B cell (primary cell): ENCODE measurements at regions of chr3 and their contacts with region 1.

Region 1: GRCh38 chr3:152350139-152350538 is 81.4 kb downstream of the MBNL1 start:
- DNase-seq: no peak
- ATAC-seq: peak; percentile 17
- H3K4me3 ChIP-seq: no peak overlapping the region
- H3K4me3 Mint-ChIP-seq: no peak overlapping the region
- H3K27ac ChIP-seq: peak overlapping the region in 1 of 2 donors; percentile 45
- H3K27ac Mint-ChIP-seq: no peak overlapping the region
- H3K4me1 ChIP-seq: peaks cover 29 to 57% of the 10 kb centered on the region in 2 donors
- H3K4me1 Mint-ChIP-seq: peaks cover 41% of the 10 kb centered on the region
- H3K27me3 ChIP-seq: no peaks in the 10 kb centered on the region
- H3K27me3 Mint-ChIP-seq: no peaks in the 10 kb centered on the region
- CTCF ChIP-seq: no peak

Region 2: GRCh38 chr3:152139651-152140050 is 210.5 kb before region 1 on chr3:
- CTCF ChIA-PET with region 1: no interaction called
- POLR2A ChIA-PET with region 1: no interaction called
- intact Hi-C with region 1: no loop called
- DNase-seq: no peak
- ATAC-seq: no peak
- H3K4me3 ChIP-seq: no peak overlapping the region
- H3K4me3 Mint-ChIP-seq: no peak overlapping the region
- H3K27ac ChIP-seq: no peak overlapping the region
- H3K27ac Mint-ChIP-seq: no peak overlapping the region
- H3K4me1 ChIP-seq: no peaks in the 10 kb centered on the region
- H3K4me1 Mint-ChIP-seq: no peaks in the 10 kb centered on the region
- H3K27me3 ChIP-seq: no peaks in the 10 kb centered on the region
- H3K27me3 Mint-ChIP-seq: no peaks in the 10 kb centered on the region
- CTCF ChIP-seq: no peak

Region 3: GRCh38 chr3:152213203-152213602 is 136.9 kb before region 1 on chr3:
- CTCF ChIA-PET with region 1: no interaction called
- POLR2A ChIA-PET with region 1: no interaction called
- intact Hi-C with region 1: no loop called
- DNase-seq: no peak
- ATAC-seq: no peak
- H3K4me3 ChIP-seq: no peak overlapping the region
- H3K4me3 Mint-ChIP-seq: no peak overlapping the region
- H3K27ac ChIP-seq: no peak overlapping the region
- H3K27ac Mint-ChIP-seq: peak overlapping the region; percentile 2
- H3K4me1 ChIP-seq: peaks cover 0 to 3% of the 10 kb centered on the region in 2 donors
- H3K4me1 Mint-ChIP-seq: peaks cover 9% of the 10 kb centered on the region
- H3K27me3 ChIP-seq: no peaks in the 10 kb centered on the region
- H3K27me3 Mint-ChIP-seq: no peaks in the 10 kb centered on the region
- CTCF ChIP-seq: no peak

Region 4: DNA sequence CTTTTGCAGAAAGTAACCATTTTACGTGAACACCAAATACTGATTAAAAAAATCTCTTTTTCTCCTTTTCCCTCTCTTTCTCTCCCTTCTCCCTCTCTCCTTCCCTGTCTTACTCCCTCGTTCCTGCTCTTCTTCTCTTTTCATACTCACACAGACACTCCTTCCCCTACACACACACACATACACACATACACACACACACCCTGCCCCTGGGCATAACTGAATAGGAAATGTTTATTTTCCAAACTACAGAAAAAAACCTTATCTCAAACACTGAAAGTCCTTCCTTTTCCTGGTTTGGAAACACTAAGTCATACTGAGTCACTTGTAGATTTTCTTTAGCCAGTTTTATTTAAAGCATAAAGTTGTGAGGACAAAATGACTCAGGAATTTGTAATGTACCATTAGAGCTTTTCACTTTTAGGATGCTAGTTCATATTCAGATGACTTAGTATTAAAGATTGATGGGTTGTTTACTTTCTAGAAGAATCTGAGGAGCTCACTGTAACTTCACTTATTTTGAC is 19.1 kb before region 1 on chr3:
- CTCF ChIA-PET with region 1: no interaction called
- POLR2A ChIA-PET with region 1: no interaction called
- intact Hi-C with region 1: loop called (anchors 2 kb)
- DNase-seq: no peak
- ATAC-seq: no peak
- H3K4me3 ChIP-seq: no peak overlapping the region
- H3K4me3 Mint-ChIP-seq: peak overlapping the region; percentile 2
- H3K27ac ChIP-seq: peak overlapping the region in 1 of 2 donors; percentile 70
- H3K27ac Mint-ChIP-seq: peak overlapping the region; percentile 32
- H3K4me1 ChIP-seq: peaks cover 38 to 60% of the 10 kb centered on the region in 2 donors
- H3K4me1 Mint-ChIP-seq: peaks cover 75% of the 10 kb centered on the region
- H3K27me3 ChIP-seq: no peaks in the 10 kb centered on the region
- H3K27me3 Mint-ChIP-seq: no peaks in the 10 kb centered on the region
- CTCF ChIP-seq: no peak

Region 5: GRCh38 chr3:152365766-152366593 is 15.8 kb after region 1 on chr3:
- CTCF ChIA-PET with region 1: interaction called, 3 read pairs
- POLR2A ChIA-PET with region 1: no interaction called
- intact Hi-C with region 1: loop called (anchors 2 kb)
- DNase-seq: no peak
- ATAC-seq: no peak
- H3K4me3 ChIP-seq: no peak overlapping the region
- H3K4me3 Mint-ChIP-seq: no peak overlapping the region
- H3K27ac ChIP-seq: peak overlapping the region in 1 of 2 donors; percentile 11
- H3K27ac Mint-ChIP-seq: peak overlapping the region; percentile 12
- H3K4me1 ChIP-seq: peaks cover 7 to 25% of the 10 kb centered on the region in 2 donors
- H3K4me1 Mint-ChIP-seq: peaks cover 70% of the 10 kb centered on the region
- H3K27me3 ChIP-seq: no peaks in the 10 kb centered on the region
- H3K27me3 Mint-ChIP-seq: no peaks in the 10 kb centered on the region
- CTCF ChIP-seq: no peak

Region 6: GRCh38 chr3:152385761-152386160 is 35.6 kb after region 1 on chr3:
- CTCF ChIA-PET with region 1: no interaction called
- POLR2A ChIA-PET with region 1: no interaction called
- intact Hi-C with region 1: loop called (anchors 5 kb)
- DNase-seq: no peak
- ATAC-seq: no peak
- H3K4me3 ChIP-seq: no peak overlapping the region
- H3K4me3 Mint-ChIP-seq: no peak overlapping the region
- H3K27ac ChIP-seq: peak overlapping the region in 1 of 2 donors; percentile 53
- H3K27ac Mint-ChIP-seq: no peak overlapping the region
- H3K4me1 ChIP-seq: peaks cover 18 to 37% of the 10 kb centered on the region in 2 donors
- H3K4me1 Mint-ChIP-seq: peaks cover 67% of the 10 kb centered on the region
- H3K27me3 ChIP-seq: no peaks in the 10 kb centered on the region
- H3K27me3 Mint-ChIP-seq: no peaks in the 10 kb centered on the region
- CTCF ChIP-seq: no peak

Region 7: DNA sequence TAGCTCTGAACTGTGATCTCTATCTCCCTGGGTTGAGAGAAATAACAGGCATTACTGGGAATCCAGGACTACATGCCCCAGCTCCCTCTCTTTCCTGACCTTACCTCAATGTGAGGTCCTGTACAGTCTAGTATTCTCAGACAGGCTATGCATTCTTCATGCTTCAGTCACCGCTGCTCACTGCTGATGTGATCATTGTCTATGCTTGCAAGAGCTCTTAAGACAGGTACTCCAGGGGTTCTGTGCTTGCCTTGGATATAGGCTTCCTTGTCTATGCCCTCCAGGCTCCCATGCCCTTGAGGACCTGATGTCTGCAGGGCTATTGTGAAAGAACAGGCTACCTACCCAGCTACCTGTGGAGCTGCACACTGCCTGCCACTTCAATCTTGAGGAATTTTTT is 102.2 kb after region 1 on chr3:
- CTCF ChIA-PET with region 1: no interaction called
- POLR2A ChIA-PET with region 1: no interaction called
- intact Hi-C with region 1: no loop called
- DNase-seq: no peak
- ATAC-seq: no peak
- H3K4me3 ChIP-seq: no peak overlapping the region
- H3K4me3 Mint-ChIP-seq: no peak overlapping the region
- H3K27ac ChIP-seq: peak overlapping the region in 1 of 2 donors; percentile 55
- H3K27ac Mint-ChIP-seq: no peak overlapping the region
- H3K4me1 ChIP-seq: no peaks in the 10 kb centered on the region
- H3K4me1 Mint-ChIP-seq: peaks cover 12% of the 10 kb centered on the region
- H3K27me3 ChIP-seq: no peaks in the 10 kb centered on the region
- H3K27me3 Mint-ChIP-seq: no peaks in the 10 kb centered on the region
- CTCF ChIP-seq: no peak

Region 8: GRCh38 chr3:153103406-153103945 is 753.3 kb after region 1 on chr3:
- CTCF ChIA-PET with region 1: no interaction called
- POLR2A ChIA-PET with region 1: no interaction called
- intact Hi-C with region 1: no loop called
- DNase-seq: no peak
- ATAC-seq: no peak
- H3K4me3 ChIP-seq: no peak overlapping the region
- H3K4me3 Mint-ChIP-seq: no peak overlapping the region
- H3K27ac ChIP-seq: no peak overlapping the region
- H3K27ac Mint-ChIP-seq: no peak overlapping the region
- H3K4me1 ChIP-seq: no peaks in the 10 kb centered on the region
- H3K4me1 Mint-ChIP-seq: no peaks in the 10 kb centered on the region
- H3K27me3 ChIP-seq: no peaks in the 10 kb centered on the region
- H3K27me3 Mint-ChIP-seq: no peaks in the 10 kb centered on the region
- CTCF ChIP-seq: no peak